ENCODE measurements at regions of chr1 and their contacts with region 1.

Region 1: DNA sequence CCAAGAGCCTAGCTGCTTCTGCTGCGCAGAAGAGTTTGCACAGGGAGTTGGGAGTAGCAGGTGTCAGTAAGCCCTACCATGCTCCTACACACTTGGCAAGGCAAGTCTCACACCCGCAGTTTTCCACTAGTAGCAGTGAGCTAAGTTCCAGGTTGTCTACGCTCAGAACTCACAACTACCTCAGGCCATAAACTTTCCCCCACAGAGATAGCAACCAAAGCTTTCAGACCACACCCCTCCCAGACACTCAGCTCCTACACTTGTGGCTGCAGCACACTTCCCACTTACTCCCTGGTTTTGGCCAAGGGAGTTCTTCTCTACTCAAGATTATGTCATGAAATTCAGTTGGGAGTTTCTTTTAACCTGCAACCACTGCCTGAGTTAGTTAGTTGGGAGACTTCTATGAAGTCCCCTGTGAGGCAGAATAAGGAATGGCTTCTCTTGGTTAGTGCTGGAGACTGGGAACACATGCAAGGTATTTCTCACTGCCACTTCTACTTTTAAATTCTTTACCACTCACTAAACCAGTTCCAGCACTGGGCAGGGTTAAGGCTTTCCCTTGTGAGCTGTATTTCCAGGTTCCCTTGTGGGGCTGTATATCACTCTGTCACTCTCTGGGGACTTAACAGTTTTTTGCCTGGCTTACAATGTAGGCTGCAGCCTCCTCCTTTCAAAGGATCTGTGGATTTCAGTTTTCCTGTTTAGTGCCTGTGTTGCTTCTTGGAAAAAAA is 18.3 kb upstream of the MAB21L3 start:
- DNase-seq: no peak
- H3K4me3 ChIP-seq: no peak overlapping the region
- H3K27ac ChIP-seq: no peak overlapping the region
- H3K4me1 ChIP-seq: no peaks in the 10 kb centered on the region
- H3K27me3 ChIP-seq: no peaks in the 10 kb centered on the region
- CTCF ChIP-seq: no peak

Region 2: DNA sequence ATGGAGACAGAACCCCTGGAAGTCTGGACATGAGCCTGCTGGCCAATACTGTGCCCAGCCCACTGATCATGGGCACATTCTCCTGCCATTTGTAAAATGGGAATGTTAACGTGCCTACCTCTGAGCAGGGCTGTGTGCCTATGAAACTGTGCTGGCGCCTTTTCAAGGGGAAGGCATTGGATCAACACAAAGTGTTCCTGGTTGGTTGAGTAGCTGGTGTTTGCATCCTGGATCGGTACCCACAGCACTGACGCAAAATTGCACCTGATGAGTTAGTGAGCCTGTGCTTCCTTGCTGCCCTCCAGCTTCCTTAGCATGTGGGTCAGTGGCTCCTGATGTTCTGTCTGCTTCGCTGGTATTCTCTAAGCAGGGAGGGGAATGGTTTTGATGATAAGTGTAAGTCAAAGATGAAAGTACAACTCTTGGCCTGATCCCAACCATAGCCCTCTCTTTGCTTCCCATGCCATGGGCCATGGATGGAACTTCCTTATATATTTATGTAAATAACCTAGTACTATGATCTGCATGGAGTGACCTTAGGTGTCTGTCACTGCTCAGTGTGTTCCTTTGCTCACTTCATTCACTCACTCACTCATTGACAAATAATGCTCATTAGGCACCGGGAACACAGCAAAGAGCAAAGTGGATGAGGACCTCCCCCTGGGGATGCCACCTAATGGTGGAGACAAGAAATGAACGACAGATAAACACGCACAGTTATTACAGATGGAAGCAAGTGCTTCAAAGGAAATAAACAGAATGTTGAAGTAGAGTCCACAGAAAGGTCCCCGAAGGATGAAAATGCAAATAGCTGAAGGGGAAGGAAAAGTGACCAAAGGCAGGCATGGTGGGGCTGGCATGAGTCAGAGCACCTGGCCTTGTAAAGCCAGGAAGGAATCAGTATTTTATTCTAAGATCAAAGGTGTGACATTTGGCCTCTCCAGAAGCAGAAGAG is 41.1 kb after region 1 on chr1:
- CTCF ChIA-PET with region 1: no interaction called
- dilution Hi-C with region 1: loop called (anchors 5 kb)
- in situ Hi-C with region 1: no loop called
- intact Hi-C with region 1: no loop called
- DNase-seq: no peak
- H3K4me3 ChIP-seq: no peak overlapping the region
- H3K27ac ChIP-seq: no peak overlapping the region
- H3K4me1 ChIP-seq: peaks cover 14% of the 10 kb centered on the region
- H3K27me3 ChIP-seq: no peaks in the 10 kb centered on the region
- CTCF ChIP-seq: no peak

Measured in mammary epithelial cell (primary cell).